ENCODE measurements at regions of chr13 and their contacts with region 1.

Region 1: DNA sequence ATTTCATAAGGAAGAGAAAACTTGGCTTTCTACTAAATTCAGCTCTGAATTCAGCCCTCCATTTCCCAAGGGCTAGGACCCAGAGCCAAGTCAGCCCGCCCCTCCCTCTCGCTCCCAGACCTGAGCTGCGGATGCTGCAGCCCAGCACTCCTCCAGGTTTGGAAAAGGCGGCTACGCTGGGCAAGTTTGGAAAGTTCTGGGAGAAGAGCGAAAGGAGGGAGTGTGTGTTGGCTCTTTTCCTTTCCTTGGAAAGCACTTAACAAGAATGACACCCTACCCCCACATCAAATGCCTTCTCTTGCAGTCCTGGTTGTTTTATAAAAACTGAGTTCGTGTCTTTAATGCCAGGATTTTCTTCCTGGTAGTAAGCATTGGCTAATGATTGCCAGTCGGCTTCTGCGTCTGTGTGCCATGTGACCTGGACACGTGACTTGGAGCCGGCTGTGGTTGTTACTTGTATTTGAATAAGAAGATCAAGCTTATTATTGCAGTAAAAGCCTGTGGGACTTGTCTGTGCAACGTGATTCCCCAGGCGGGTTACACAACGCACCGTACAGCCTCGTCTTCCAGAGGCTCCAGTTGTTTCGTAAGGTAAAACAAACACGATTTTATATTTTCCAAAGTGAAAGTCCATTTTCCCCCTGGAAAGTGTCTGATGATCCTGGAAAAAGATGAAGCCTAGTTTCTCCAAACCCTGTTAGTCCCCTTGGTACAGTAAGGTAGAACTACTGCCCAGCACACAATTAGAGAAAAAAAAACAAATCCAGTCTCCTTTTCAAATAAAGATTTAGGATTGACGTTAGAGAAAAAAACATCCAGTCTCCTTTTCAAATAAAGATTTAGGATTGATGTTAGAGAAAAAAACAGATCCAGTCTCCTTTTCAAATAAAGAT is 26.9 kb upstream of the UBE2L5 start:
- DNase-seq: peak; percentile 22 to 83 (median 71)
- ATAC-seq: peak; percentile 82
- H3K4me3 ChIP-seq: peak overlapping the region; percentile 71
- H3K4me3 Mint-ChIP-seq: peak overlapping the region; percentile 83 to 97 (median 88)
- H3K27ac ChIP-seq: peak overlapping the region; percentile 78
- H3K27ac Mint-ChIP-seq: peak overlapping the region; percentile 90 to 97 (median 95)
- H3K4me1 ChIP-seq: peaks cover 16 to 31% of the 10 kb centered on the region in 2 donors
- H3K4me1 Mint-ChIP-seq: peaks cover 17 to 58% (median 54%) of the 10 kb centered on the region in 7 donors
- H3K27me3 ChIP-seq: no peaks in the 10 kb centered on the region
- H3K27me3 Mint-ChIP-seq: no peaks in the 10 kb centered on the region

Region 2: GRCh38 chr13:30382836-30383525 is 12.5 kb before region 1 on chr13:
- CTCF ChIA-PET with region 1: interaction called, 9 read pairs
- POLR2A ChIA-PET with region 1: interaction called, 111 read pairs
- intact Hi-C with region 1: no loop called
- DNase-seq: peak in 4 of 9 donors; percentile 29 to 38 (median 36)
- ATAC-seq: peak; percentile 32
- H3K4me3 ChIP-seq: no peak overlapping the region
- H3K4me3 Mint-ChIP-seq: peak overlapping the region; percentile 33 to 74 (median 62)
- H3K27ac ChIP-seq: no peak overlapping the region
- H3K27ac Mint-ChIP-seq: peak overlapping the region; percentile 19 to 91 (median 64)
- H3K4me1 ChIP-seq: peaks cover 14 to 30% of the 10 kb centered on the region in 2 donors
- H3K4me1 Mint-ChIP-seq: peaks cover 30 to 70% (median 47%) of the 10 kb centered on the region in 7 donors
- H3K27me3 ChIP-seq: no peaks in the 10 kb centered on the region
- H3K27me3 Mint-ChIP-seq: no peaks in the 10 kb centered on the region

Region 3: GRCh38 chr13:30408319-30409101 is 13.1 kb after region 1 on chr13:
- CTCF ChIA-PET with region 1: interaction called, 3 read pairs
- POLR2A ChIA-PET with region 1: interaction called, 27 read pairs
- intact Hi-C with region 1: loop called (anchors 1 to 2 kb)
- DNase-seq: peak; percentile 78 to 89 (median 85)
- ATAC-seq: peak; percentile 97
- H3K4me3 ChIP-seq: peak overlapping the region; percentile 44
- H3K4me3 Mint-ChIP-seq: peak overlapping the region; percentile 64 to 78 (median 72)
- H3K27ac ChIP-seq: peak overlapping the region; percentile 52
- H3K27ac Mint-ChIP-seq: peak overlapping the region; percentile 51 to 87 (median 83)
- H3K4me1 ChIP-seq: peaks cover 9 to 14% of the 10 kb centered on the region in 2 donors
- H3K4me1 Mint-ChIP-seq: peaks cover 6 to 46% (median 37%) of the 10 kb centered on the region in 7 donors
- H3K27me3 ChIP-seq: no peaks in the 10 kb centered on the region
- H3K27me3 Mint-ChIP-seq: peaks cover 0 to 12% (median 0%) of the 10 kb centered on the region in 5 donors

Region 4: DNA sequence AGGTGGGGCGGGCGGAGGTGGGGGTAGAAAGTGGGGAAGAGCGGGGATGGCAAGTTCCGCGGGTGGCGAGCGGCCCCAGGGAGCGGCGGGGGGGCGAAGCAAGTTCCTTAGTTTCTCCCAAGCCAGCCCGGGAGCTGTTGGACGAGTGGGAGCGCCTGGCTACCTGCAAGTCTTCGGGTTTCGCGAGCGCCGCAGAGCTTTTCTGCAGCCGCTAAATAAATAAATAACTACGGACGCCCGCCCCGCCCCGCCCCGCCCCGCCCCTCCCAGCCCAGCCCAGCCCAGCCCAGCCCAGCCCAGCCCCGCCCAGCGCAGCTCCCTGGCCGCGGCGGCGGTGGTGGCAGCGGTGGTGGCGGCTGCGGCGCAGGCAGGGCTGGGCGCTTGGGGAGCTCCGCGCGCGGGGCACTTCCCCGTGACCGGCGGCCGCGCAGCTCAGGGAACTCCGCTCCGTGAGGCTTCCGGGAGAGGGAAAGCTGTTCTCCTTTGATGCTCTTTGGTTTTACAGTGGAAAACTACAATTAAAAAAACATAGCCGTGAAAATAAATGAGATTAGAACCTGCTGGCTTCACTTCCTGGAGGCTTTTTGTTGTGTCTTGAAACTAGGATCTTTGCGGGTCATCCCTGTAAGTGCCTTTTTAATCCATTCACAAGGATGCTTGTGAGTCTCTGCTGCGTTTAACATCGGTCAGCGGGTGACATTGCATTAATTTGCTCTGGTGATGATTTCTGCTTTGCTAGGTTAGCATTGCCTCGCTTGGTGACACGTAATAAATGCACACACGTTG is 26.8 kb after region 1 on chr13 and contains the start of gene UBE2L5:
- CTCF ChIA-PET with region 1: interaction called, 4 read pairs
- POLR2A ChIA-PET with region 1: interaction called, 4 read pairs
- intact Hi-C with region 1: loop called (anchors 1 kb)
- DNase-seq: peak; percentile 41 to 89 (median 56)
- ATAC-seq: peak; percentile 92
- H3K4me3 ChIP-seq: peak within 1 kb of the TSS; percentile 67
- H3K4me3 Mint-ChIP-seq: peak within 1 kb of the TSS; percentile 80 to 94 (median 89)
- H3K27ac ChIP-seq: peak within 1 kb of the TSS; percentile 38
- H3K27ac Mint-ChIP-seq: peak within 1 kb of the TSS; percentile 64 to 93 (median 86)
- H3K4me1 ChIP-seq: no peaks in the 10 kb centered on the region
- H3K4me1 Mint-ChIP-seq: peaks cover 7 to 29% (median 15%) of the 10 kb centered on the region in 7 donors
- H3K27me3 ChIP-seq: no peaks in the 10 kb centered on the region
- H3K27me3 Mint-ChIP-seq: no peaks in the 10 kb centered on the region
- total RNA-seq, gene UBE2L5: not detected

Region 5: GRCh38 chr13:31765138-31765785 is 1369.8 kb after region 1 on chr13:
- CTCF ChIA-PET with region 1: no interaction called
- POLR2A ChIA-PET with region 1: no interaction called
- intact Hi-C with region 1: no loop called
- DNase-seq: no peak
- ATAC-seq: no peak
- H3K4me3 ChIP-seq: no peak overlapping the region
- H3K4me3 Mint-ChIP-seq: no peak overlapping the region
- H3K27ac ChIP-seq: no peak overlapping the region
- H3K27ac Mint-ChIP-seq: no peak overlapping the region
- H3K4me1 ChIP-seq: no peaks in the 10 kb centered on the region
- H3K4me1 Mint-ChIP-seq: no peaks in the 10 kb centered on the region
- H3K27me3 ChIP-seq: no peaks in the 10 kb centered on the region
- H3K27me3 Mint-ChIP-seq: peaks cover 0 to 11% (median 8%) of the 10 kb centered on the region in 5 donors

Measured in naive thymus-derived CD4-positive, alpha-beta T cell (primary cell).